Endothelial cell of umbilical vein (primary cell): ENCODE measurements at regions of chr9 and their contacts with region 1.

Region 1: GRCh38 chr9:37784616-37785483 is at the start of gene EXOSC3:
- DNase-seq: peak; percentile 91
- H3K4me3 ChIP-seq: peak within 1 kb of the TSS; percentile 42 to 80 (median 64)
- H3K27ac ChIP-seq: peak within 1 kb of the TSS; percentile 34
- H3K4me1 ChIP-seq: peaks cover 12% of the 10 kb centered on the region
- H3K27me3 ChIP-seq: no peaks in the 10 kb centered on the region
- CTCF ChIP-seq: no peak
- POLR2A ChIP-seq: peak; percentile 94
- total RNA-seq, gene EXOSC3: 38.0 and 39.1 TPM in 2 replicates

Region 2: DNA sequence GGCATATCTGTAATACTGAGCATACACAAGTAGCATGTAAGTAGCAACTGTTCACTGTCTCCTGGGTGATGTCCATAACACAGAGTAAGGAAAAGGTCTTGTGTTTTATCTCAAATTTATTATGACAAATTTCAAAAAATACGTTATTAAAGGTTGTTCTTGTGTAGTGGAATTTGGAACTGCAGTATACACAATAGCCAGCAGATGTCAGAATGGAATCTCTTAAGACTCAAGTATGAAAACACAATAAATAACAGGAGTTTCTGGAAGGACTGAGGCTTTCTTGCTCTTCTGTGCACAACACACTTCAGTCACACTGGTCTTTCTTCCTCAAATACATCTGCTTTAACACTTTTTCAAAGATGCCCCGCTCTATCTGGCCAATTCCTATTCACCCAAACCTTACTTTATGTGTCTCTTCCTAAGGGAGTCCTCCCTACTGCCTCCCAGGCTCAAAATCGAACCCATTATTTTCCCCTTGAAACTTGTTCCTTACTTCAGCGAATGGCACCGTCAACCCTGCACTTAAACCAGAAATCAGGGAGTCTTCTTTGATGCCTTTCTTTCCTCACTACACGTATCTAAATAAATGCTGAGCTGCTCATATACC is 202.2 kb before region 1 on chr9:
- CTCF ChIA-PET with region 1: no interaction called
- POLR2A ChIA-PET with region 1: no interaction called
- dilution Hi-C with region 1: no loop called
- intact Hi-C with region 1: loop called (anchors 10 kb)
- DNase-seq: peak; percentile 75
- H3K4me3 ChIP-seq: no peak overlapping the region
- H3K27ac ChIP-seq: no peak overlapping the region
- H3K4me1 ChIP-seq: no peaks in the 10 kb centered on the region
- H3K27me3 ChIP-seq: no peaks in the 10 kb centered on the region
- CTCF ChIP-seq: peak; percentile 36 to 46
- POLR2A ChIP-seq: no peak

Region 3: GRCh38 chr9:37650873-37651768 is 133.7 kb before region 1 on chr9 and contains the start of gene FRMPD1:
- CTCF ChIA-PET with region 1: no interaction called
- POLR2A ChIA-PET with region 1: no interaction called
- dilution Hi-C with region 1: no loop called
- intact Hi-C with region 1: no loop called
- DNase-seq: peak; percentile 39
- H3K4me3 ChIP-seq: peak within 1 kb of the TSS; percentile 29 to 41 (median 37)
- H3K27ac ChIP-seq: no peak within 1 kb of the TSS
- H3K4me1 ChIP-seq: peaks cover 6% of the 10 kb centered on the region
- H3K27me3 ChIP-seq: peaks cover 49 to 52% of the 10 kb centered on the region in 2 experiments
- CTCF ChIP-seq: no peak
- POLR2A ChIP-seq: no peak
- total RNA-seq, gene FRMPD1: not detected in 2 replicates

Region 4: DNA sequence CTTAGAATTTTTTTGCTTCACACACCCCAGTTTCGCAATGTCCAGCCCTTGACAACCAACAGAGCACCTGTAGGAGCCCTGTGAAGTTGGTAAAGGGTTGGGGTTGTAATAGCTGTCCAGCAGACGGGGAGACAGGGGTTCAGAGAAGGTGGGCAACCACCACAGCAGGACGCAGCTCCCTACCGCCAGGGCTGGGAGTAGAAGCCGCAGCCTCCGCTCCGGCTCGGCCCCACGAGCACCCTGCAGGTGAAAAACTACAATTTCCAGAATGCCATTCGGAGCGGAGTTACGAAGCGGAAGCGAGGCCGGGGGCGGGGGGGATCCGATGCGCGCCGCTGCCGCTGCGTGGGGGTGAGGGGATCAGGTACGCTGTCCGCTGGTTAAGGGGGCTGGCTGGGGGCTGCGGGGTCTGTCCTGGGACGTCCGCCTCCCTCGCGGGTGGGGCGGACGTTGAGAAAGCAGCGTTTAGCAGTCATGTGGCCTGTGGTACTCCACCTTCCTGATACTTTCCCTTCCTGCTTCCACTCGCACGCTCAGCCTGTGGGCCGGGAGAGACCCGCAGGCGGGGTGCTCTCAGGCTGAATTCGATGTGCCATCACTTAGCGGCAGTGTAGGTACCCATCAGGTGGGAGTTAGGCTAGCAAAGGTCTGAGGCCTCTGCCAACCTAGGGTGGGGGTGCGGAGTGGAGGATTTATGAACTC is 31.2 kb before region 1 on chr9 and contains the start of gene TRMT10B:
- CTCF ChIA-PET with region 1: no interaction called
- POLR2A ChIA-PET with region 1: no interaction called
- dilution Hi-C with region 1: no loop called
- intact Hi-C with region 1: loop called (anchors 2 kb)
- DNase-seq: peak; percentile 82
- H3K4me3 ChIP-seq: peak within 1 kb of the TSS; percentile 66 to 96 (median 92)
- H3K27ac ChIP-seq: peak within 1 kb of the TSS; percentile 69
- H3K4me1 ChIP-seq: peaks cover 10% of the 10 kb centered on the region
- H3K27me3 ChIP-seq: peaks cover 0 to 6% of the 10 kb centered on the region in 2 experiments
- CTCF ChIP-seq: peak in 1 of 2 donors; percentile 6
- POLR2A ChIP-seq: peak; percentile 65
- total RNA-seq, gene TRMT10B: 5.2 and 7.0 TPM in 2 replicates